ENCODE measurements at regions of chr11 and their contacts with region 1.

Region 1: GRCh38 chr11:45267052-45267451 is 19.1 kb downstream of the SYT13 start:
- DNase-seq: peak in 1 of 2 experiments; percentile 97
- H3K4me3 ChIP-seq: no peak overlapping the region
- H3K27ac ChIP-seq: no peak overlapping the region
- H3K4me1 ChIP-seq: peaks cover 0 to 2% (median 0%) of the 10 kb centered on the region in 4 experiments; a peak in 1 of 7 replicates
- H3K27me3 ChIP-seq: peaks cover 0 to 7% (median under 1%) of the 10 kb centered on the region in 4 experiments; a peak in 3 of 7 replicates
- CTCF ChIP-seq: peak; percentile 82 to 86 (median 84)
- EP300 ChIP-seq: no peak
- POLR2A ChIP-seq: no peak
- RAD21 ChIP-seq: peak; percentile 61 to 65

Region 2: GRCh38 chr11:45073685-45074141 is 193.3 kb before region 1 on chr11:
- CTCF ChIA-PET with region 1: no interaction called
- POLR2A ChIA-PET with region 1: no interaction called
- DNase-seq: no peak
- H3K4me3 ChIP-seq: no peak overlapping the region
- H3K27ac ChIP-seq: no peak overlapping the region
- H3K4me1 ChIP-seq: peaks cover 0 to 7% (median 0%) of the 10 kb centered on the region in 4 experiments; a peak in 3 of 7 replicates
- H3K27me3 ChIP-seq: peaks cover 0 to 2% (median 0%) of the 10 kb centered on the region in 4 experiments; a peak in 1 of 7 replicates
- CTCF ChIP-seq: no peak
- EP300 ChIP-seq: no peak
- POLR2A ChIP-seq: no peak
- RAD21 ChIP-seq: no peak

Region 3: DNA sequence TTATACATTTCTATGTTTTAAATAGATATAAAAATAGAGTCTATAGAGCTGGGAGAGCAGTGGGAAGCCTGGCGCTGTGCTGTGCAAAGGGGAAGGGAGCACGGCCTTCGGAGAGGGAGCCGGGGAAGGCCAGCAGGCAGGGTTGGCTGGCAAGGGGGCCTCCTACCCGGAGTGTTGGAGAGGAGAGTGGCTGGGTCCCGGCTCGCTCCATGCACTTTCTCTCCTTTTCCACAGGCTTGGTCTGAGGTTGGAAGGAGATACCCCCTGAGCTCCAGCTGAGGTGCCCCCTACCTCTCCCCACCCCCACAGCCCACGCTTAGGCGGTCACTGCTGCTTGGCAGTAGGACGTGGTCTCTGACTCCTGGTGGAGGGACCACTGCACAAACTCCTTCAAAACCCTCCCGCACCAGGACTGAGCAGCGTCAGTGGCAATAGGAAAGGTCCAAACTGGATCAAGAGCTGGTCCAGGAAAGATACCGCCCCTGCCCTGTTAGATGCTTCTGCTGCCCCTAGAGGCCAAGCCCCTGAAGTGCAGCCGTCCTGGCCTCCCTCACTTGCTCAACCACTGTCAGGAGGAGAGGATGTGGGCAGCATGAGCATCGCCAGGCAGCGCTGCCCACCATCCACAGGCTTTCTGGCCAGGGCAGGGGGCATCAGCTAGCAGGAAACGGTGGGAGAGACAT is 33.8 kb before region 1 on chr11:
- CTCF ChIA-PET with region 1: interaction called, 11 read pairs
- POLR2A ChIA-PET with region 1: no interaction called
- DNase-seq: peak; percentile 53 to 94
- H3K4me3 ChIP-seq: peak overlapping the region in 1 of 4 experiments; percentile 22; a peak in 1 of 8 replicates
- H3K27ac ChIP-seq: no peak overlapping the region
- H3K4me1 ChIP-seq: peaks cover 0 to 4% (median 2%) of the 10 kb centered on the region in 4 experiments; a peak in 2 of 7 replicates
- H3K27me3 ChIP-seq: no peaks in the 10 kb centered on the region
- CTCF ChIP-seq: peak; percentile 73 to 98 (median 94)
- EP300 ChIP-seq: no peak
- POLR2A ChIP-seq: no peak
- RAD21 ChIP-seq: peak; percentile 52 to 59

Region 4: GRCh38 chr11:45285930-45286632 is 19.0 kb after region 1 on chr11 and contains the start of gene SYT13:
- CTCF ChIA-PET with region 1: interaction called, 211 read pairs
- POLR2A ChIA-PET with region 1: interaction called, 4 read pairs
- DNase-seq: peak; percentile 54 to 88
- H3K4me3 ChIP-seq: peak within 1 kb of the TSS; percentile 63 to 80 (median 70)
- H3K27ac ChIP-seq: no peak within 1 kb of the TSS
- H3K4me1 ChIP-seq: peaks cover 0 to 9% (median 3%) of the 10 kb centered on the region in 4 experiments; a peak in 5 of 7 replicates
- H3K27me3 ChIP-seq: peaks cover 2 to 18% (median 14%) of the 10 kb centered on the region in 4 experiments
- CTCF ChIP-seq: no peak
- EP300 ChIP-seq: no peak
- POLR2A ChIP-seq: peak in 1 of 2 experiments; percentile 49; a peak in 2 of 3 replicates
- RAD21 ChIP-seq: no peak
- total RNA-seq, gene SYT13: 12.3 and 13.2 TPM in 2 replicates

Region 5: GRCh38 chr11:45319077-45319476 is 52.0 kb after region 1 on chr11:
- CTCF ChIA-PET with region 1: interaction called, 15 read pairs
- POLR2A ChIA-PET with region 1: no interaction called
- DNase-seq: no peak
- H3K4me3 ChIP-seq: no peak overlapping the region
- H3K27ac ChIP-seq: no peak overlapping the region
- H3K4me1 ChIP-seq: no peaks in the 10 kb centered on the region; a peak in 1 of 7 replicates
- H3K27me3 ChIP-seq: peaks cover 0 to 2% (median 0%) of the 10 kb centered on the region in 4 experiments; a peak in 1 of 7 replicates
- CTCF ChIP-seq: no peak
- EP300 ChIP-seq: no peak
- POLR2A ChIP-seq: no peak
- RAD21 ChIP-seq: no peak

Region 6: DNA sequence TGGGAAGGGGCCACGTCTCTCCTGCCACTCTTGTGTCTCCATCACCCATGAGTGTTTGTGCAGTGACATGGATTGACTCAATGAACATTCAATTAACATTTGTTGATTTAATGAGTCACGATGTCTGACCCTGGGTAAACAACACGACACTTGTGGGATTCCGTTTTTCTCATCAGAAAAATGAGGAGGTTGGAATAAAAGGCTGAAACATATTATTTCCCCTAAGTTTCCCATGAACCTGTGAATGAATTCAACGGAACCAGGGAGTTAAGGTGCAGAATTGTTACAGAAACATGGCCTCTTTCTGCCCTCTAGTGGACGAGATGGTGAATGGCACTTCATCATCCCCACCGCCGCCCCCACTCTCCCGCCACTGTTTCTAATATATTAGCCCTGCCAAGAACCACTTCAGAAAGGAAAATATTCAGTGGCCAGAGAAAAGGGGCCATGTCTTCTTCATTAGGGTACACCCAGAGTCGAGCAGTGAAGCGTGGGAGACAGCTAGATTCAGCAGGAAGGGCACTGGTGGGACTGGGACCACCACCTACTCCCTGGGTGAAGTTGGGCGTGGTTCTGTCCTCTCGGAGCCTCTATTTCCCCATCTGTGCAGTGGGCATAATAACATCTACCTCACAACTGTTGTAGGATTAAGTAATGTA is 65.4 kb after region 1 on chr11:
- CTCF ChIA-PET with region 1: interaction called, 29 read pairs
- POLR2A ChIA-PET with region 1: no interaction called
- DNase-seq: peak in 1 of 2 experiments; percentile 68
- H3K4me3 ChIP-seq: no peak overlapping the region
- H3K27ac ChIP-seq: no peak overlapping the region
- H3K4me1 ChIP-seq: no peaks in the 10 kb centered on the region
- H3K27me3 ChIP-seq: no peaks in the 10 kb centered on the region; a peak in 1 of 7 replicates
- CTCF ChIP-seq: peak; percentile 44 to 65 (median 49)
- EP300 ChIP-seq: no peak
- POLR2A ChIP-seq: no peak
- RAD21 ChIP-seq: peak; percentile 80 to 82